Left ventricle myocardium superior (tissue), 1 donor: ENCODE measurements at regions of chr13 and their contacts with region 1.

Region 1: DNA sequence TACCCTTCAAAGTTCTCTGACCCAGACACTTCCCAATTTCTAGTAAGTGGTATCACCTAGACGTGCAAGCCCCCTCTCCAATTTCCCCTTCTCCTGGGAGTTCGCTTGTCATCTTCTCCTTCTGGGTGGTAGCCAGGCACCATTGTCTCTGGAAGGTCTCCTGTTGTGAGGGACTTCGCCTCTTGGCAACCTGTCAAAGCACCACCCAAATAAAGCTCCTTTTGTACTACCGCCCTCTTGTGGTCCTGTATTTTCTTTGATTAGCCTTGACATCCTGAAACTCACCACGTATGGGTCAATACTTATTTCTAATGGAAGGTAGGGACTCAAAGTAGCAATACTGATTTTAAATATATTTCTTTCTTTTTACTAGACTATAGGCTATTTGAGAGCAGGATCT is 8.2 kb downstream of the GPC5 start:
- DNase-seq: peak; percentile 13
- ATAC-seq: no peak

Region 2: DNA sequence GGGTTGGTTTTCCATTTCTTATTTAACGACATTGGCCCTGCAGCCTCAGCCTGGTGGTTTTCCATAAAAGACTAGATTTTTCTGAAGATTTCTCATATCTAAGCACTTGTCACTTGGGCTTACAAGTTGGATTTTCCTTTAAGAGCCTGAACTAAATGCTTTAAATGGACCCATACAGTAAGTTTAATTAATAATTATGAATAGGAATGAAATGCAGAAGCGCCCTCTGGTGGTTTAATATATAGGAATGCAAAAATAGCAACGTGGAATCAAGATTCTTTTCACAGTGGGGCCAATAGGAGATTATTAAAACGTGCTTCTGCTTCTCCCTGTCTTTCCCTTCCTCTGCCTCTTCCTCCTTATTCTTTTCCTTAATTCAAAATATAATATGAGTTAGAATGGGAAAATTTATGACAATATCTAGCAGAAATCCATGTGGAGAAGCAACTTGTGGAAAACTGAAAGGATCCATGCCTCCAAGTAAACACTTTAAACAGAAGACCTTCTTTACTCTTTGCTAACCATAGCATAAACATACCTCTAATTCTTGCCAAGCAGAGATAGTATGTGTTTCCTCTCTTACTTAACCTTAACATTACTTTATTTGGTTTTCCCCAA is 315.8 kb after region 1 on chr13:
- intact Hi-C with region 1: loop called (anchors 10 kb)
- DNase-seq: no peak
- ATAC-seq: peak; percentile 37